ENCODE measurements at regions of chr4 and their contacts with region 1.

Region 1: GRCh38 chr4:20305976-20306375 is 54.3 kb downstream of the SLIT2 start:
- DNase-seq: peak; percentile 27
- H3K4me3 ChIP-seq: no peak overlapping the region
- H3K27ac ChIP-seq: no peak overlapping the region
- H3K27me3 ChIP-seq: no peaks in the 10 kb centered on the region
- CTCF ChIP-seq: peak; percentile 59

Region 2: GRCh38 chr4:20318001-20318908 is 12.3 kb after region 1 on chr4:
- CTCF ChIA-PET with region 1: interaction called, 10 read pairs
- POLR2A ChIA-PET with region 1: no interaction called
- DNase-seq: no peak
- H3K4me3 ChIP-seq: peak overlapping the region; percentile 14; the same call in 1 of the 2 replicates
- H3K27ac ChIP-seq: peak overlapping the region; percentile 25
- H3K27me3 ChIP-seq: no peaks in the 10 kb centered on the region
- CTCF ChIP-seq: no peak

Region 3: GRCh38 chr4:20428436-20429160 is 122.6 kb after region 1 on chr4:
- CTCF ChIA-PET with region 1: interaction called, 81 read pairs
- POLR2A ChIA-PET with region 1: no interaction called
- DNase-seq: no peak
- H3K4me3 ChIP-seq: no peak overlapping the region
- H3K27ac ChIP-seq: no peak overlapping the region
- H3K27me3 ChIP-seq: no peaks in the 10 kb centered on the region
- CTCF ChIP-seq: peak; percentile 46

Region 4: DNA sequence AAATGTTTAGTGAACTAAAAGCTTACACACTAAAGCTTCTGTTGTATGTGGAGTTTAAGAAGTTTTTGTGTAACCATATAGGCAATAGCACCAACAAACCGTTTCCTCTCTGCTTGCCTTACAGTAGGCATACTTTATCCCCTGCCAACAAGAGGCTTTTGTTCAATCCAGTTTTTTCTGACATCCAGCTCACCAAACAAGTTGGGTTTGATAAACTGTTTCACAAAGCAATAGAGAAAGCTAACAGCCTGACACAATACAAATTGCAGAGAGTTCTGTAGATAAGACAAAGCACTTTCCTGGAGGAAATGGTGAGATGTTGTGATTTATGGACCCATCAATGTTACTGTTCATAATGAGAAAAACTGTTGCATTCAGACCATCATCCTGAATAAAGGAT is 448.1 kb after region 1 on chr4:
- CTCF ChIA-PET with region 1: no interaction called
- POLR2A ChIA-PET with region 1: no interaction called
- DNase-seq: no peak
- H3K4me3 ChIP-seq: no peak overlapping the region
- H3K27ac ChIP-seq: no peak overlapping the region
- H3K27me3 ChIP-seq: no peaks in the 10 kb centered on the region
- CTCF ChIP-seq: no peak

Region 5: DNA sequence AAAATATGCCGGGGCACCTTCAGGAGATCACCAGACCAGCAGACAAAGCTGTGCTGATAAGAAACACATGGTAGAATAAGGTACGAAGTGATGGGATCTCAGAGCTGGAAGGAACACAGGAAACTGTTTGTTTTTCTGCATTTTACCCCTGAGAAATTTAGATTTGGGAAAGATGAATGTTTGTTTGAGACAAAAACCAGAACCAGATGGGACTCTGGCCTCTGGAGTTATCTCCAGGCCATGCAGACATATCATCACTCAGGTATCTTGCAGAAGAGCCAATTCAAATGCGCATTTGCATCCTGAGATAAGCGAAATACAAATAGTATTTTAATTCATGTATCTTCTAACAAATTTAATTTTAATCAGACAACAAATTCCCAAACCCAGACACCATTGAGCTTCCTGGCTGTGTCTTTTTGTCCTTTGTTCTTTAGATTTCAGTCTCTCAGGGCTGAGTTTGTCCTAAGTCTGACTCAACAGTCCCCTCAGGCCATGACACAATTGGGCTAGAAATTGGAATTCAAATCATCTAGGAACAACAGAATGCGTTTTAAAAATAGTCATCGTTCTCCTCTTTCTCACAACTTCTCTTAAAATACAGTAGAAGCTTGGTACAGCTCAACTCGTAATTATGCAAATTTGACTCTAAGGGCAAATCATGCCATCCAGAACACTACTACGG is 553.3 kb after region 1 on chr4:
- CTCF ChIA-PET with region 1: no interaction called
- POLR2A ChIA-PET with region 1: no interaction called
- DNase-seq: no peak
- H3K4me3 ChIP-seq: no peak overlapping the region
- H3K27ac ChIP-seq: no peak overlapping the region
- H3K27me3 ChIP-seq: no peaks in the 10 kb centered on the region
- CTCF ChIP-seq: no peak